ENCODE measurements at regions of chr3 and their contacts with region 1.

Region 1: GRCh38 chr3:3179407-3180094 is at the start of gene CRBN:
- DNase-seq: peak; percentile 41
- ATAC-seq: peak; percentile 99
- H3K4me3 ChIP-seq: peak within 1 kb of the TSS; percentile 88
- H3K27ac ChIP-seq: peak within 1 kb of the TSS; percentile 67
- H3K4me1 ChIP-seq: peaks cover 8% of the 10 kb centered on the region
- H3K27me3 ChIP-seq: peaks cover 0 to 2% of the 10 kb centered on the region in 2 experiments; a peak in 1 of 4 replicates
- CTCF ChIP-seq: peak; percentile 94 to 98 (median 98)
- EP300 ChIP-seq: no peak
- POLR2A ChIP-seq: peak; percentile 98
- RAD21 ChIP-seq: peak; percentile 70
- polyA plus RNA-seq, gene CRBN: 110 to 115 TPM

Region 2: DNA sequence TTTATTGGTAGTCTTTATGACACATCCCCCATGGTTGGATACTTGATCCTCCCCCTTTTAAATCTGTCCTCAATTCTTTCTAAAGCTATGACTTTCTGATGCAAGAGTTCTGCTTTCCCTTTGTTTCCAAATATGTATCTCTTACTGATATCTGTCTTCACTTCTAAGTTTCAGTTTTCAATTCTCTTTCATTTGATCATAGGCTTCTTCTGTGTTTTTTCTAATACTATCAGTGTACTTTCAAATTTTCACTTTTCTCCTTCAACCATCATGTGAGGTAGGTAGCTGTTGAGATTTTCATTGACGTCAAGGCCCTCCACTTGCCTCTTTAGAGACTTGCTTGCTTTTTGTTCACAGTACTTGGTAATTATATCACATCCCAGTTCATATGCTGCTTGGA is 644.3 kb before region 1 on chr3:
- CTCF ChIA-PET with region 1: no interaction called
- POLR2A ChIA-PET with region 1: no interaction called
- RAD21 ChIA-PET with region 1: no interaction called
- SMC1A ChIA-PET with region 1: no interaction called
- in situ Hi-C with region 1: no loop called
- intact Hi-C with region 1: loop called (anchors 10 kb)
- DNase-seq: peak; percentile 67
- ATAC-seq: peak; percentile 87
- H3K4me3 ChIP-seq: no peak overlapping the region; the same call in 1 of the 2 replicates
- H3K27ac ChIP-seq: peak overlapping the region; percentile 80
- H3K4me1 ChIP-seq: peaks cover 10% of the 10 kb centered on the region
- H3K27me3 ChIP-seq: no peaks in the 10 kb centered on the region
- CTCF ChIP-seq: no peak
- EP300 ChIP-seq: peak; percentile 72 to 86; a peak in 2 of 4 replicates
- POLR2A ChIP-seq: no peak
- RAD21 ChIP-seq: no peak

Region 3: GRCh38 chr3:2765002-2765579 is 414.5 kb before region 1 on chr3:
- CTCF ChIA-PET with region 1: no interaction called
- POLR2A ChIA-PET with region 1: no interaction called
- RAD21 ChIA-PET with region 1: no interaction called
- SMC1A ChIA-PET with region 1: no interaction called
- in situ Hi-C with region 1: no loop called
- intact Hi-C with region 1: loop called (anchors 10 kb)
- DNase-seq: no peak
- ATAC-seq: peak; percentile 59
- H3K4me3 ChIP-seq: no peak overlapping the region
- H3K27ac ChIP-seq: no peak overlapping the region
- H3K4me1 ChIP-seq: no peaks in the 10 kb centered on the region
- H3K27me3 ChIP-seq: no peaks in the 10 kb centered on the region
- CTCF ChIP-seq: peak; percentile 34 to 48 (median 41); a peak in 4 of 6 replicates
- EP300 ChIP-seq: no peak
- POLR2A ChIP-seq: no peak
- RAD21 ChIP-seq: peak; percentile 43

Region 4: DNA sequence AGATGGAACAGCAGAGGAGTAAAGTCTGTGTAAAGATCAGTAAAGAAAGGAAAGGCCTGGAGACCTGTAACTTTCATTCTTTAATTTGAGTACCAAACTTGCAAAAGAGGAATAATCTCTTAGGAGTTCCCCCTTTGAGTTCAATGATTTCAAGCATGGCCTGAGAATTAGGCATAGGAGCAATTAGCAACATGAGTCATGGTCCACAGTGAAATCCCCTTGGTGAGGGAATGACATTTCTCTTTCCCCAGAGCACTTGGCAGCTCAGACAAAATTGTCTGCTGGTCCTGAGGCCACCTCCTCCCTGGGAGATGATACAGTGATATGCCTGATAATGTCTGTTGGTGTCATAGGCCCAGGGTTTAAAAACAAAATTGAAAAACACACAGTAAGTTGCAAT is 81.3 kb after region 1 on chr3:
- CTCF ChIA-PET with region 1: no interaction called
- POLR2A ChIA-PET with region 1: no interaction called
- RAD21 ChIA-PET with region 1: no interaction called
- SMC1A ChIA-PET with region 1: no interaction called
- in situ Hi-C with region 1: no loop called
- intact Hi-C with region 1: no loop called
- DNase-seq: peak; percentile 8
- ATAC-seq: peak; percentile 63
- H3K4me3 ChIP-seq: no peak overlapping the region
- H3K27ac ChIP-seq: no peak overlapping the region
- H3K4me1 ChIP-seq: no peaks in the 10 kb centered on the region
- H3K27me3 ChIP-seq: no peaks in the 10 kb centered on the region
- CTCF ChIP-seq: no peak
- EP300 ChIP-seq: no peak
- POLR2A ChIP-seq: no peak
- RAD21 ChIP-seq: no peak

Region 5: DNA sequence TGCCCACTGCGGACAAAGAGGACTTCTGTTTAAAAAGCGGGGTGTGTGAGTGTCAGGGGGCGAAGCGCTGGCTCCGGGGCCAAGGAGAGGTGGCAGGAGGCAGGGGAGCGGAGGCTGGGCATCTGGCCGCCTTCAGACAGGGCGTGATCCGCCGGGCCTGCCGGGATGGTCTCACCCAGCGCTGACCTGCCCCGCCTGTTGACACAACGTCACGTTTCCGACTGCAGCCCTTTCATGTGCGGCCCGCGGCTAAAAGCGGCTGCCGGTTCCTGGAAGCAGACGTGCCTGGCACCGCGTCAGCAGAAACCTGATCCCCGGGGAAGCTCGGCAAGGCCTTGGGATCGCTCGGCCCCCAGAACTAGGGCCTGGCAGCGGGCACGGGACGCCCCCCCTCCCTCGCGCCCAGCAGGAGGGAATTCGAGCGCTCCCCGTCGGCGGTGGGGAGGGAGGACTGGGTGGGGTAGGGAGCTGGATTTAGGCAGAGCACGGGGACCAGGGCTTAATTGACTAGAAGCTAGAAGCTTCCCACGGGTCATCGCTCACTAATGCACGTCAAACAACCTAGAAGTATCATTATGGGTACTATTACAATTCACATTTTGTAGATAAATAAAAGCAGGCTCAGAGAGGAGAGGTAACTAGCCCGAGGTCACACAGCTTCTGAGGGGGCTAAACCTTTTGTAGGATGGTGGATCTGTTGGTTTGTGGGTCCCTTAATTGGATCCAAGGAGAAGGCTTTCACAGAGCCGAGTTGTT is 1807.4 kb after region 1 on chr3:
- CTCF ChIA-PET with region 1: no interaction called
- POLR2A ChIA-PET with region 1: no interaction called
- RAD21 ChIA-PET with region 1: no interaction called
- SMC1A ChIA-PET with region 1: no interaction called
- in situ Hi-C with region 1: no loop called
- intact Hi-C with region 1: no loop called
- DNase-seq: no peak
- ATAC-seq: peak; percentile 69
- H3K4me3 ChIP-seq: peak overlapping the region; percentile 70
- H3K27ac ChIP-seq: peak overlapping the region; percentile 86
- H3K4me1 ChIP-seq: peaks cover 38% of the 10 kb centered on the region
- H3K27me3 ChIP-seq: no peaks in the 10 kb centered on the region
- CTCF ChIP-seq: no peak
- EP300 ChIP-seq: 0 out of 4 replicates have a peak, but pooled peaks of 1 of the 2 experiments have one; percentile 58
- POLR2A ChIP-seq: peak; percentile 92
- RAD21 ChIP-seq: no peak; the same call in 1 of the 2 replicates